ENCODE measurements at regions of chr18 and their contacts with region 1.

Region 1: GRCh38 chr18:48007955-48008701 is 77.7 kb upstream of the SMAD2 start:
- DNase-seq: peak; percentile 51
- H3K4me3 ChIP-seq: peak overlapping the region; percentile 48 to 70 (median 62)
- H3K27ac ChIP-seq: peak overlapping the region; percentile 51
- H3K4me1 ChIP-seq: peaks cover 26% of the 10 kb centered on the region
- H3K27me3 ChIP-seq: peaks cover 3 to 7% of the 10 kb centered on the region in 2 experiments
- CTCF ChIP-seq: peak; percentile 31 to 53
- POLR2A ChIP-seq: peak; percentile 66

Region 2: DNA sequence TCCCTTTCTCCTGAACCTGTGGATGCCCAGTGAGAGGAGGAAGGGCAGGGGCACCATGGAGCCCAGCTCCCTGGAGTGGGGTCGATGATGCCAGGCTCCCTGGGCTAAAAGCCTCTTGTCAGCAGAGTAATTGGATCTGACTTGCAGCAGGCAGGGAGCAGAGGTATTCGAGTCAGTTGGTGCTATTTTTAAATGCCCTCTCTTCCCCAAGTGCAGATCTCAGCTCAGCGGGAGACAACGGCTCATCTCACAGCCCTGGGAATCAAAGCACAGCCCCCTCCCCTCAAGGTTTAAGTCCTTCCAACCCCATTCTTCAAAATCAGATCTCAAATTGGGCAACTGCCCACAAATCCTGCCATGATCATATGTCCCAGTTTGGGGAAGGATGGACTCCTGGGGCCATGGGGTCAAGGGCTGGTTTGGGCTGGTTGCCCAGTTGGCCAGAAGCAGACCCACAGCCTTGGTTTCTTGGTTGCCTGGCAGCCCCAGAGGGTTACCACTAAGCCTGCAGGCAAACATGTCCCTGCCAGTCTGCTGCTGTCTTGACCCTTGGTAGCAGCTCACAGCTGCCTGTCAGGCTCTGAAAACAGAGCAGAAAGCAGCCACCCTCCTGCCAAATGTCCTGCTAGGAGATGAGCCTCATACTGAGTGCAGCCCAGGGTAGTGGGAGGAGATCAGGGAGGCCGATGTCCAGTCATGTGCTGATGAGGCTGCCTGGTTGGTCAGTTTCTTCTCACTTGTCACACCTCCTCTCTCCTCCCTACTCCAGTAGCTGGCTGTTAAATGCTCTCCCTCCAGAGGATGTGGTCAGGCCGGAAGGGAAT is 1596.0 kb before region 1 on chr18:
- CTCF ChIA-PET with region 1: no interaction called
- POLR2A ChIA-PET with region 1: no interaction called
- dilution Hi-C with region 1: no loop called
- intact Hi-C with region 1: no loop called
- DNase-seq: no peak
- H3K4me3 ChIP-seq: no peak overlapping the region
- H3K27ac ChIP-seq: no peak overlapping the region
- H3K4me1 ChIP-seq: no peaks in the 10 kb centered on the region
- H3K27me3 ChIP-seq: no peaks in the 10 kb centered on the region
- CTCF ChIP-seq: no peak
- POLR2A ChIP-seq: no peak

Region 3: DNA sequence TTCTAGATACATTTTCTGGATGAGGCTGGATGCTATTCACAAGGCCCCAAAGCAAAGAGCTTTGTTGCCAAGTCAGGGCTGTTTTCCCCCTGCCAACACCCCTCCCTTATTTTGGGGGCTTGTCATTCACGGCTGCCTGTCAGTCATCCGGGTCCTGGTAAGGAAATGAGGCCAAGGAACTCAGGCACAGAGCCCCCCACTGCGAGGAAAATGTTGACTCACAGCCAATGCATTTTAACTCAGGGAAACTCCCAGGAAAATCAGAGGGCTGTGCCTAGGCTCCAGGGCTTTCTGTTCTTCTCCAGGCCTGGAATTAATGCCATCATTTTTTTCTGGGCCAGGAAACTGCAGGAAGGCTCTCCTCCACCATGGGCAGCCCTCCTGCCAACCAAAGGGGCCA is 318.8 kb before region 1 on chr18:
- CTCF ChIA-PET with region 1: no interaction called
- POLR2A ChIA-PET with region 1: no interaction called
- dilution Hi-C with region 1: no loop called
- intact Hi-C with region 1: no loop called
- DNase-seq: no peak
- H3K4me3 ChIP-seq: no peak overlapping the region
- H3K27ac ChIP-seq: no peak overlapping the region
- H3K4me1 ChIP-seq: no peaks in the 10 kb centered on the region
- H3K27me3 ChIP-seq: no peaks in the 10 kb centered on the region
- CTCF ChIP-seq: no peak
- POLR2A ChIP-seq: no peak

Region 4: DNA sequence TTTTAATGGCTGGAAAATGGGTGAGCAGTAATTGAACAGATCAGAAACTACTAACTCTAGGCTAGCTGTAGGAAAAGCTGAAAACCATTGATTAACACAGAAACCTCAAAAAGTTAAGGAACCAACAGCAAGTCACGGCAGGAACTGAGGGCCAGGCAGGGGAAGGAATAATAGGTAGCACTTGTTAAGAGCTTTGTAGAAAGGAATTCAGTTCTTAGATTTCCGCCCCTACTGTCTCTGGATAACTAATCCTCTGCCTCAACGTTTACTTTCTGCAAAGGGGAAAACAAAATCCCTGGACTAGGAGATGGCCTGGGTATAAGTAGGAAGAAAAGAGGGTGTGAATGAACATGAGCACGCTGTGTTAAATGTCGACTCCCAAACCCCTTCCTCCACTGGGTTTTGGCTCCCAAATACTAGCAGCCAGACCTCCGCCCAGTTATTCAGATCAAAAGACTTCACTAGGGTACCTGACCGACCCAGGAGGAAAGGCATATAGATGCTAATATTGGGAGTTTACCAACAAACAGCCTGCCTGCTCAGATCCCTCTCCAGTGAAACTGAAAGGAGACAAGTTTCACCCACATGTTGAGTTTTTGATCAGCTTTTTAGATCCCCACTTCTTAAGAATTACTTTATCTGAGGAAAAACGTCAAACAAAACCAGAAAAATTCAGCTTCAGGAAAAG is 90.1 kb before region 1 on chr18:
- CTCF ChIA-PET with region 1: no interaction called
- POLR2A ChIA-PET with region 1: no interaction called
- dilution Hi-C with region 1: no loop called
- intact Hi-C with region 1: no loop called
- DNase-seq: no peak
- H3K4me3 ChIP-seq: no peak overlapping the region
- H3K27ac ChIP-seq: no peak overlapping the region
- H3K4me1 ChIP-seq: no peaks in the 10 kb centered on the region
- H3K27me3 ChIP-seq: no peaks in the 10 kb centered on the region
- CTCF ChIP-seq: no peak
- POLR2A ChIP-seq: no peak

Region 5: DNA sequence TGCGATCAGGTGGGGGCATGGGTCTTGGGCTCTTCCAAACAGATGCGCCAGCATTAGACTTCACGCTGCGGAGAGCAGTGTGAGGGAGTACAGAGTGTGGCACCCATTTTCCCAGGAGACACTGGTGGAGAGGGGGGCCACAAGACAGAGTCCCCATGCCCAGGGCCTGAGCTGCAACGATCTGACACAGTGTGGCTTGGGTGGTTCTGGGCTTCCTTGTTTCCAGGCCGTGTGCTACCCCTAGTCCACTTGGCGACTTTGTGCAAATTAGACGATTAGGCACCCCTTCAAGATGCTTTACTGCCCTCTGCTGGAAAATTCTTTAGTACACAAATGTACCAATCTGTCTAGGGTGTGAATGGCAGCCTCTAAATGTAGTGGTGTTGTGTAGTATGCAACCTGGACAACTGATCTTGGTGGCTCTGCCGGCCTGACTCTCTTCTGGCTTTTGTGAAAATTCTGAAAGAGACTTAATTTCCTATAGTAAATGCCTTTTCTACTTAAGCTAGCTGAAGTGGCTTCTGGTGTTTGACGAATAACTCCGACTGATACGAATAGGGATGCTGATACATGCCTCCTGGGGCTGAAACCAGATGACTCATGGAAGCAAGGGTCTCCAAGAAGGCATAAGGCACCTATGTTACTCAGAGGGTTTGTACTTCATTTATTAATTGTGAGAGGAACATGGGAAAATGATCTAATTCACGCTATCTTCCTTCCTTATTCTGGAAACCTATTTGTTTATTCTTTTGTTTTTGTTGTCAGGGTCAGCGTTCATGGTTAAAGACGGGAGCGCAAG is 14.6 kb after region 1 on chr18:
- CTCF ChIA-PET with region 1: interaction called, 14 read pairs
- POLR2A ChIA-PET with region 1: no interaction called
- dilution Hi-C with region 1: no loop called
- intact Hi-C with region 1: loop called (anchors 2 kb)
- DNase-seq: peak; percentile 64
- H3K4me3 ChIP-seq: no peak overlapping the region
- H3K27ac ChIP-seq: no peak overlapping the region
- H3K4me1 ChIP-seq: peaks cover 10% of the 10 kb centered on the region
- H3K27me3 ChIP-seq: peaks cover 2 to 9% of the 10 kb centered on the region in 2 experiments
- CTCF ChIP-seq: peak; percentile 47 to 57
- POLR2A ChIP-seq: no peak

Region 6: GRCh38 chr18:48308027-48308635 is 300.0 kb after region 1 on chr18:
- CTCF ChIA-PET with region 1: no interaction called
- POLR2A ChIA-PET with region 1: no interaction called
- dilution Hi-C with region 1: no loop called
- intact Hi-C with region 1: no loop called
- DNase-seq: no peak
- H3K4me3 ChIP-seq: no peak overlapping the region
- H3K27ac ChIP-seq: no peak overlapping the region
- H3K4me1 ChIP-seq: no peaks in the 10 kb centered on the region
- H3K27me3 ChIP-seq: no peaks in the 10 kb centered on the region
- CTCF ChIP-seq: no peak
- POLR2A ChIP-seq: no peak